PC-3 (cell line): ENCODE measurements at regions of chr10 and their contacts with region 1.

Region 1: DNA sequence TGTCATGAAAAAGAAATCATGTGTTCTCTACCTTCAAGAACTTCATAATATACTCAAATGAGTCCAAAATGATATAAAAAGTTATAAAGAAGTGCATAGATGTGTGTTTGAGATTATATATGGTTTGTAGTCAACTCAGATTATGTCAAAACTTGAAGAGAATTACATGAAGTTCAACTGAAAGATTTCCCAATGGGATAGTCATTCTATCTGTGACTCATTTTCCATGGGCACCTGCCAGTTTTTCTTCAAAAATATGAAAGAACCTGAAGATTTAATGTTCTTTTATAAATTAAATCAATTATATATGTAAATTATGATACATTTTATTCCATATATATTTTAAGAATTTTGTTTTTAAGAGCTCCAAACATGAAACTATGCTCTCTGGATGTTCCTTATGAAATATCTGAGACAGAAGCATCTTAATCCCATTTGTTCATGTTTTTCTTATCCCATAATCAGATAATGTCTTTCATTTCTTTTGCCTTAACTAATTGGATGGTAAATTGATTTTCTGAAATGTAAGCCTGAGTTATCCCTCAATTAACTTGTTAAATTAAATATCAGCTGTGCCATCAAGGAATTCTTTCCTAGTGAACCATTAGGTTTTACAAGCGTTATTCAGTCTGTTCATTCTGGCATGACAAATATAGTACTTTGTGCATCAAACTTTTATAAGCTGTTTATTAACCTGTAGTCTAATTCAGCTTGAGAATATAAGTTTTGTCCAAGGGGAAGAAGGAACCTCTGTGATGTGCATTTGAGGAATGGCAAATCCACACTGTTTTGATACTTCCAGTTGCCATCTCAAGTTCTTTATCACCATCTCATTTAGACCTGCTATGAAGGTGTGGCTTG is 387.0 kb downstream of the IPMK start:
- DNase-seq: peak; percentile 73
- ATAC-seq: peak; percentile 66
- H3K4me3 ChIP-seq: no peak overlapping the region
- H3K27ac ChIP-seq: no peak overlapping the region
- H3K4me1 ChIP-seq: peaks cover 19% of the 10 kb centered on the region
- H3K27me3 ChIP-seq: no peaks in the 10 kb centered on the region
- CTCF ChIP-seq: no peak

Region 2: DNA sequence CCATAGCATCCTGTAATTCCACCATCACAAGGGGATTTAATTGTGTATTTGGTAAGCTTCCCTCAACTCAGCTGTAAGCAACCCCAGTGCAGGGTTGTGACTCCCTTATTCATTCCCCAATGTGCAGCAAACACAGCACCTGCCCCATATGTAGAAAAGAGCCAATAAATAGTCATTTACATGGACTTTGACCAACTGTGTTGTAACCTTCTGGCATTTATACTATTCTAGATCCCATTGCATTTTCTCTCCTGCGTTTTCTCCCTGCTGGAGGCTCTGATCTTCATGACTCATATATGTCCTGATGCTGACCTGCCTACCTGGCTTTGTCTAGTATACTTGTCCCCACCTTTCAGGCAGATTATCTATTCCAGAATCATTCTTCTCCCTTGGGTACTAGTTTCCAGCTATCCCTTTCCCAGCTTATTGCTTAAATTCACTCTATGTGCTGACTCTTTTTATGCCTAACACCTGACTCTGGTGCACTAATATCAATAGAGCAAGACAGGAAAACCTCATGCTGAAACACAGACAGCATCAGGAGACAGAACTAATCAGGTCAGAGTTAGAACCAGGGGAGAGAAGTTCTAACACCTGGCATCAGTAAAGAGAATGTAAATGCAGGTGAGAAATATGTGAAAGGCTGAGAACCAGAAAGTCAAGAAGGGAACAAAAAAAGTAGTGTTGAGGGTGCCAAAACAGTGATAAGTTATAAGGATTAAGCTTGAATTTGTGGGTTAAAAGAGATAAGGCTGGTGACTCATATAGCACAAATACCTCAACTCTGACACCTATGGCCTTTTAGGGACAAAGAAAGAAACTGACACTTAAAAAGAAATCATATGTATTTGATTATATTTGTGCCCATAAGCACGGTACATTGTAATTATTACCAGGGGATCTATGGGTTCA is 15.7 kb before region 1 on chr10:
- CTCF ChIA-PET with region 1: no interaction called
- POLR2A ChIA-PET with region 1: no interaction called
- intact Hi-C with region 1: loop called (anchors 1 kb)
- DNase-seq: peak; percentile 77
- ATAC-seq: peak; percentile 48
- H3K4me3 ChIP-seq: no peak overlapping the region
- H3K27ac ChIP-seq: 0 out of 2 replicates have a peak overlapping the region, but pooled peaks have one; percentile 4
- H3K4me1 ChIP-seq: peaks cover 37% of the 10 kb centered on the region
- H3K27me3 ChIP-seq: no peaks in the 10 kb centered on the region
- CTCF ChIP-seq: no peak

Region 3: GRCh38 chr10:57917019-57917418 is 36.3 kb after region 1 on chr10:
- CTCF ChIA-PET with region 1: no interaction called
- POLR2A ChIA-PET with region 1: no interaction called
- intact Hi-C with region 1: loop called (anchors 5 kb)
- DNase-seq: no peak
- ATAC-seq: no peak
- H3K4me3 ChIP-seq: no peak overlapping the region
- H3K27ac ChIP-seq: no peak overlapping the region
- H3K4me1 ChIP-seq: peaks cover 25% of the 10 kb centered on the region
- H3K27me3 ChIP-seq: no peaks in the 10 kb centered on the region
- CTCF ChIP-seq: no peak

Region 4: GRCh38 chr10:57964351-57964750 is 83.7 kb after region 1 on chr10:
- CTCF ChIA-PET with region 1: no interaction called
- POLR2A ChIA-PET with region 1: no interaction called
- intact Hi-C with region 1: loop called (anchors 1 kb)
- DNase-seq: peak; percentile 94
- ATAC-seq: peak; percentile 96
- H3K4me3 ChIP-seq: no peak overlapping the region
- H3K27ac ChIP-seq: 0 out of 2 replicates have a peak overlapping the region, but pooled peaks have one; percentile 1
- H3K4me1 ChIP-seq: peaks cover 19% of the 10 kb centered on the region
- H3K27me3 ChIP-seq: no peaks in the 10 kb centered on the region
- CTCF ChIP-seq: no peak

Region 5: DNA sequence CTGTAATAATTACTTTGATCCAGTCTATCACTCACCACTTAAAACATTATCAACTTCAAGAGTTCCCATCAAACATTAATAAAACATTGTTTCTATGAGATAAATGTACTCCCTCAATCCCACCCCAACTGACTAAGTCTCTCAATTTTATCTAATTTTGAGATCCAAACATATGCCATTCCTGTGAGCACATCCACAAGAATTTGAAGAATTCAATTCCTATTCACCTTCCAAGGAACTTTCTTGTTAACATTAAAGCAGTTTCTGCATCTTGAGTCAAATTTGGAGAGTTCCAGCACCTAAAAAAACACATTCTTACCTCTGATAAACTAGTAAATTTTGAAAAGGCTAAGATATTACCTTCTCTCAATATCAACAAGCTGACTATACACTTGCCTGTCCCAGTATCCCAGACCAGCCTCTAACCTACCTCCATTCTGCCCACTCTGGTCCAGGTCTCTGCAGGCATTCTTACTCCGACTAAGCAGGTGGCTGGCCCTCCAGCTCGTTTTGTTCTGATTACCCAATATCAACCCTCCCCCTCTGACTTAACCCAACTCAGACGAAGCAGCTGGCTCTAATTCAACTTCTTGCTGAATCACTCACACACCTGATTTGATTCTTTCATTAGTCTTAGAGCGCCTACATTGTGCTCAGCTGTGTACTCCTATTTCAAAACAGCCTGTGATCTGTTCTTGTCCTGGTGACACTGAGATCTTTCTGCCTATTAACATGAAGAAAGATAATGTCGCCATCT is 111.8 kb after region 1 on chr10:
- CTCF ChIA-PET with region 1: no interaction called
- POLR2A ChIA-PET with region 1: no interaction called
- intact Hi-C with region 1: no loop called
- DNase-seq: peak; percentile 89
- ATAC-seq: peak; percentile 79
- H3K4me3 ChIP-seq: no peak overlapping the region
- H3K27ac ChIP-seq: no peak overlapping the region
- H3K4me1 ChIP-seq: peaks cover 13% of the 10 kb centered on the region
- H3K27me3 ChIP-seq: no peaks in the 10 kb centered on the region
- CTCF ChIP-seq: 0 out of 2 replicates have a peak, but pooled peaks have one; percentile 38

Region 6: DNA sequence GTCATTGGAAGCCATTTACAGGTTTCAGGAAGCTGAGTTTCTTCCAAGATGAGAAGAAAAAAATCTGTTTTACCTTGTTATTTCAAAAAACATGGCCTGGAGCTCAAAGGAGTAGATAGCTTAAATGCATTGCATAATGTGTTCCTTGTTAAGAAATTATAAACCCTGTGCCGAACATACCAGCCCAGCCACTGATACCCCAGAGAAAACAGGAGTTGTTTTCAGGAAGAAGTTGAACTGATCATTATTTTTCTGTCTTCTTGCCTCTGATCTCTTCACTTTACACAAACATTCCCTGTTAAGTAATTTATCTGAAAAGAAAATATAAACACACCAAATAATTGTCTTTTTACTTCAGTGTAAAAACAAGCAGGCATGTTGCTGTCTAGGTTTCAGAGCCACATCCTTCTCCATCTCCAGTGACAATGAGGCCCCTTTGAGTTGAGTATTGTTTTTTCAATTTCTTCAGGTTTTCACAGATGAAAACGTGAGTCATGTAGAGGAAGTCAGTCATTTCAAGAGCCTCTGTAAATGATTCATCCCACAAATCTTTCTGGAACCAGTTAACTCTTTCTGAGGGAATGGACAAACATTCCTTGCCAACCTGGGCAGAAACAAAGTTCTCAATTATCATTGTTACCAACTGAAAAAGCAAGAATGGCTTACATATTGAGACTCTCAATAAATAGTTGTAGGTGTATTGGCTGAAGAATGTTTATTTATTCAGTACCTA is 142.8 kb after region 1 on chr10:
- CTCF ChIA-PET with region 1: no interaction called
- POLR2A ChIA-PET with region 1: no interaction called
- intact Hi-C with region 1: loop called (anchors 5 kb)
- DNase-seq: peak; percentile 97
- ATAC-seq: peak; percentile 92
- H3K4me3 ChIP-seq: no peak overlapping the region
- H3K27ac ChIP-seq: peak overlapping the region; percentile 82
- H3K4me1 ChIP-seq: peaks cover 25% of the 10 kb centered on the region
- H3K27me3 ChIP-seq: no peaks in the 10 kb centered on the region
- CTCF ChIP-seq: no peak